Psoas muscle (tissue), 8 donors: ENCODE measurements at regions of chr6 and their contacts with region 1.

Region 1: GRCh38 chr6:165439928-165440554 is 130.6 kb upstream of the C6orf118 start:
- DNase-seq: no peak
- ATAC-seq: peak in 1 of 4 donors; percentile 60
- H3K4me3 ChIP-seq: no peak overlapping the region
- H3K27ac ChIP-seq: no peak overlapping the region
- H3K4me1 ChIP-seq: no peaks in the 10 kb centered on the region
- H3K27me3 ChIP-seq: no peaks in the 10 kb centered on the region
- CTCF ChIP-seq: peak; percentile 66

Region 2: GRCh38 chr6:164832429-164832840 is 607.6 kb before region 1 on chr6:
- intact Hi-C with region 1: no loop called
- DNase-seq: no peak
- ATAC-seq: no peak
- H3K4me3 ChIP-seq: no peak overlapping the region
- H3K27ac ChIP-seq: no peak overlapping the region
- H3K4me1 ChIP-seq: no peaks in the 10 kb centered on the region
- H3K27me3 ChIP-seq: no peaks in the 10 kb centered on the region
- CTCF ChIP-seq: no peak

Region 3: GRCh38 chr6:165605901-165606664 is 166.0 kb after region 1 on chr6:
- intact Hi-C with region 1: no loop called
- DNase-seq: no peak
- ATAC-seq: no peak
- H3K4me3 ChIP-seq: no peak overlapping the region
- H3K27ac ChIP-seq: no peak overlapping the region
- H3K4me1 ChIP-seq: no peaks in the 10 kb centered on the region
- H3K27me3 ChIP-seq: no peaks in the 10 kb centered on the region
- CTCF ChIP-seq: no peak

Region 4: DNA sequence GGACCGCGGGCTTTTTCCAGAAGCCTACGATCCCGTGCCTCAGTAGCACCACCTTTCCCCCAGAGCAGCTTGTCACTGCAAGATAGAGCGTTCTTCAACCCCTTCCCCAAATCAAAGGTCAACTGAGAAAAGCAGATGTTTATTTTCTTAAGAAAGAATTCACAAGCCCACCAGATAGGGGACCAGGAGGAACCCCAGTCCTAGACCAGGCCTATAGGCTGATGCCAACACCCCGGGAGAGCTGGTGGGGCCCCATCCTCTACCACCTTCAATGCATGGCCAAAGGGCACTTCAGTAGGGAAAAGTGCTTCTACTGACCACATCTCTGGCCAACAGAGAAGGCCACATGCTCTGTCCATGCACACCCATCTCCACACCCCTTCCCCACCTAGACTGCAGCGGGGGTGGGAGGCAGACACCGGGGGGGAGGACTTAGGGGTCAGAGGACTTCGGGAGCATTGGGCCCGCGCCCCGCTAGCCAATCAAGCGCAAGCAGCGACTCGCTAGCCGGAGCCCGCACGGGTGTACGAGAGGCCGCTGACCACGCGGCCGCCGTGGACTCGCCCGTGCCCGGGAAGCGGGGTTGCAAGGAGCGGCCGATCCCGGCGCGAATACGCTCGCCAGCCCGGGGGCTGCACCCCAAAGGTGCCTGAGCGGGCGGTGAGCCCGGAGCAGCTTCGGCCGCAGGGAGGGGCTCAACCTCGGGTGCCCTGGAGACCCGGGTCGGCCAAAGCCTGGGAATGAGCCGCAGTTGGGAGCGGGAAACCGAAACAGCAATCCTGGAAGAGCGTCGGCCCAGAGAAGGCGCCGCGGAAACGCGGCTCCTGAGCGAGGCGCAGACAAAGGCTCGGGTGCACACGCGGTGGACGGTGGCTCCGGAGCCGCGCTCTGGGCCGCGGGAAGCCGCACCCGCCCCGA is 220.2 kb after region 1 on chr6:
- intact Hi-C with region 1: loop called in 1 of 2 experiments (anchors 10 kb)
- DNase-seq: peak in 1 of 2 donors; percentile 25
- ATAC-seq: peak; percentile 23 to 47 (median 34)
- H3K4me3 ChIP-seq: peak overlapping the region; percentile 71
- H3K27ac ChIP-seq: peak overlapping the region; percentile 16
- H3K4me1 ChIP-seq: peaks cover 12% of the 10 kb centered on the region
- H3K27me3 ChIP-seq: peaks cover 0 to 56% (median 17%) of the 10 kb centered on the region in 3 donors
- CTCF ChIP-seq: no peak

Region 5: GRCh38 chr6:165729307-165729936 is 289.4 kb after region 1 on chr6:
- intact Hi-C with region 1: loop called in 1 of 2 experiments (anchors 5 kb)
- DNase-seq: no peak
- ATAC-seq: no peak
- H3K4me3 ChIP-seq: no peak overlapping the region
- H3K27ac ChIP-seq: no peak overlapping the region
- H3K4me1 ChIP-seq: no peaks in the 10 kb centered on the region
- H3K27me3 ChIP-seq: no peaks in the 10 kb centered on the region
- CTCF ChIP-seq: peak; percentile 60

Region 6: DNA sequence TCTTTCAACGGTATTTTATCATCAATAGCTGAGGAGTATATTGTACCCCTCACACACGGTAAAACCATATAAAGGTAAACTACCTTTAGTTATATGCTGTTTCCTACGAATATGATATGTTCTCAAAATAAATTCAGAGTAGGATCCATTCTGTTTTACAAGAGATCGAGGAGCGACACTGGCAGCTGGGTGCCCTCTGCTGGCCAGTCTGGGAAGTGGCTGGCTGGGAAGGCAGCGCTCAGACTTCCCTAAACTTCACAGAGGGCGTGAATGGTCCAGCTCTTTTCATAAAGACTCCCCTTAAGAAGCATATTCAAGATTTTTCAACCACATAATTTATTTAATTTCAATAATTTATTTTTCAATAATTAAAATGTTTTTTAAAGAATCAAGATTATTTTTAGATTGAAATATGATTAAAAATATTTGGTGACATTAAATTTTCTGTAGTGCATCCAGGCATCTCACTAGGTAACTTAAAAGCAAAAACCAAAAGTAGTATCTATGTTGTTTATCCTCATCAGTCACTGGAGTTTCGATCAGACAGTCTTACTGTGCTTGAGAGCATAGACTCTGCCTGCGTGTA is 410.5 kb after region 1 on chr6:
- intact Hi-C with region 1: loop called (anchors 2 to 5 kb)
- DNase-seq: peak; percentile 64 to 79
- ATAC-seq: peak; percentile 62 to 80 (median 67)
- H3K4me3 ChIP-seq: peak overlapping the region; percentile 28
- H3K27ac ChIP-seq: no peak overlapping the region
- H3K4me1 ChIP-seq: no peaks in the 10 kb centered on the region
- H3K27me3 ChIP-seq: peaks cover 0 to 32% (median 15%) of the 10 kb centered on the region in 3 donors
- CTCF ChIP-seq: peak; percentile 95

Region 7: GRCh38 chr6:166106076-166106686 is 666.1 kb after region 1 on chr6:
- intact Hi-C with region 1: loop called in 1 of 2 experiments (anchors 10 kb)
- DNase-seq: peak; percentile 68 to 69
- ATAC-seq: peak in 3 of 4 donors; percentile 24 to 49 (median 40)
- H3K4me3 ChIP-seq: no peak overlapping the region
- H3K27ac ChIP-seq: no peak overlapping the region
- H3K4me1 ChIP-seq: no peaks in the 10 kb centered on the region
- H3K27me3 ChIP-seq: no peaks in the 10 kb centered on the region
- CTCF ChIP-seq: peak; percentile 67